ENCODE measurements at regions of chr1 and their contacts with region 1.

Region 1: DNA sequence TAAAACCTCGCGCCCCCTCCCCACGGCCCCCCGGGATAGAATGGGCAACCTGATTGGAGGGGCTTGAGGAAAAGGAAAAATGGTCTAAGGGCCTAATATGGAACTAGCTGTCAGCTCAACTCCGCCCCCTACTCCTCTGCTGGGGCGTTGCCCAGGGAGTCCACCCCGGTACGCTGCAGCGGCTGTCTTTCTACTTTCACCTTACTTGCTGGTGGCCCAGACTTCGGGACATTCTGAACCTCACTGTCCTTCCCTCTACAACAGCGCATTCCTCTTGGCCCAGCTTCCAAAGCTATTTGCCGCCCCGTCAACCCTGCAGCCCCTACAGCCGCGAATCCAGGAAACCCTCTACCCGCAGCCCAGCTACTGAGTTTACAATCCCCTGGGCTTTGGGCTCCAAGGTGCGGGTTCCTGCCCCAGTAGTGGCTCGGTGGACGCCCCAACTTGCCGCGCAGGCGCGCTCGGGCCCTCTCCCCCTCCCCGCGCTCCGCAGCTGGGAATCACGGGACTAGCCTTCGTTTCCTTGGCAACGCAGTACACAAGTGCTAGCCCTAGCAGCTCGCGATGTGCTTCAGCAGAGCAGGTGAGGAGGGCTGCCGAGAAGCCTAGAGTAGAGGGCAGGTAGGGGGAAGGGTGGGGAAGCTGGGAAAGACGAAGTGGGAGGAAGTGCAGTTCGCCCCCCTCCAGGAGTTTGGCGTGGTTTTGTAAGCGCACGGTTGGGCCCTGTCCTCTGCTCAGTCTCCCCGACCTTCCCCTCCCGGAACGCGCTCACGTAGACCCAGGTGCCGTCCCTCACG is 55.6 kb downstream of the CHIA start:
- DNase-seq: peak; percentile 92 to 94 (median 94)
- H3K4me3 ChIP-seq: peak overlapping the region; percentile 59 to 82
- H3K4me3 Mint-ChIP-seq: peak overlapping the region; percentile 87 to 96 (median 92)
- H3K27ac ChIP-seq: peak overlapping the region; percentile 46
- H3K27ac Mint-ChIP-seq: peak overlapping the region; percentile 84 to 97 (median 96)
- H3K4me1 ChIP-seq: peaks cover 16% of the 10 kb centered on the region
- H3K4me1 Mint-ChIP-seq: peaks cover 13 to 25% (median 18%) of the 10 kb centered on the region in 4 donors
- H3K27me3 ChIP-seq: no peaks in the 10 kb centered on the region
- H3K27me3 Mint-ChIP-seq: no peaks in the 10 kb centered on the region

Region 2: DNA sequence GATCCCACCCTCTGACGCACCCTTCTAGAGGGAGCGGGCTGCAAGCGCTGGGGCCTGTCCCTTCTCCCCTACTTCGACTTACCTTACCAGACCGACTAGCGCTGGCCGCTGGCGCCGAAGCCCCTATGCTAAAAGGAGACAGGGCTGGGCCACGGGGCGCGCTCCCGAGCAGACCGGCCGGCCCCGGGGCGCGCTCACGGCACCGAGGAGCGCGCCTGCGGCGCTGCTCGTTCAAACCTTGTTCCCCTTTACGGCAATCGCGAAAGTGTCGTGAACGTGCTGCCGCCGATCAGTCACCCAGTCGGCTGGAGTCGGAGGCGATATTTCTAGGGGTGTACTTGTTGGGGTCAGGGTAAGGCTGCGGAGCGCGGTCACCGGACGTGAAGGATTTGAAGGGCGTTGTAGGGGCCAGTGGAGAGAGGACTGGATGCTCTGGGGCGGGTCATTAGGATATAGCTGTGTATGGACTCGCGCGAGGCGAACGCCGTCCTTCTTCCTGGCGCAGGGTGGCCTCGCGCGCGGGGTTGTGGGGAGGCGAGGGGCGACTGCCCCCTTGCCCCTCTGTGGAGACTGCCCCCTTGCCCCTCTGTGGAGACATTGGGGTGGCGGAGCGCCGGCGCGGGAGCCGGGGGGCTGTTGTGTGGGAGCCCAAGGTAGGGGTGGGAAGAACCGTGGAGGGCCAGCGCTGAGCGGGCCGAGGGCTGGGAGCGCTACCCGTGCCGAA is 206.2 kb before region 1 on chr1 and contains the starts of genes CEPT1 and DRAM2:
- CTCF ChIA-PET with region 1: no interaction called
- POLR2A ChIA-PET with region 1: interaction called, 4 read pairs
- intact Hi-C with region 1: loop called (anchors 1 kb)
- DNase-seq: peak; percentile 89 to 95 (median 91)
- H3K4me3 ChIP-seq: peak within 1 kb of the TSS; percentile 57 to 97
- H3K4me3 Mint-ChIP-seq: peak within 1 kb of the TSS; percentile 98 to 100 (median 100)
- H3K27ac ChIP-seq: peak within 1 kb of the TSS; percentile 79
- H3K27ac Mint-ChIP-seq: peak within 1 kb of the TSS; percentile 84 to 100 (median 99)
- H3K4me1 ChIP-seq: peaks cover 54% of the 10 kb centered on the region
- H3K4me1 Mint-ChIP-seq: peaks cover 32 to 54% (median 41%) of the 10 kb centered on the region in 4 donors
- H3K27me3 ChIP-seq: no peaks in the 10 kb centered on the region
- H3K27me3 Mint-ChIP-seq: no peaks in the 10 kb centered on the region
- total RNA-seq, gene CEPT1: 49.1 to 49.6 TPM
- total RNA-seq, gene DRAM2: 37.5 to 38.8 TPM

Region 3: DNA sequence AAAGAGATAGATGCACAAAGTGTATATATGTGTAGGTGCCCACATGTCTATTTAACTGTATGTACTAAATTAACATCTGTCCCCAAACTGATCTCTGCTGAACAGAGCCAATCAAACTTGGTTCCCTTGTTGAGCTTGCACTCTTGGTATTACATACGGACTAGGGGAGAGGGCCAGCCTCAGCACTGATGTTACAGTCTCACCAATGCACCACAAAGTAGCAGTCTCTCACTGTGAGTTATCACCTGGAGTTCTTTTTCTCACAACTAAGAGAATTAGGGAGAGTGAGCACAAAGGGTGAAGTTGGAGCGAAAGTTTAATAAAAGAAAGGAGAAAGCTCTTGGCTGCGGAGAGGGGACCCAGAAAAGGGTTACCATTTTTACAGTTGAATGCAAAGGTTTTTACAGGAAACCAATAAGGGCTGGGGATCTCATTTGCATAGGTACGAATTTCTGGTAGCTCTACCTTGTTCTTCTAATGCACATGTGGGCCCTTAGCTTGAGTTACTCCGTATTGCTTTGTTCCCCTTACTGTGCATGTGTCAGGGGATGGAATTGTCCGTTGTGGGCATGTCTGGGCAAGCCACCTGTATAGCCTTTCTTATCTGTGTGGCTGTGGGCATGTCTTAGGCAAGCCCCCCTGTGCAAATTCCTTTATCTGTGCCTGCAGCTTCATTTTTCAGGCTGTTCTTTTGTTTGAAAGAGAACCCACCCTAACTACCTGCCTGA is 132.0 kb before region 1 on chr1:
- CTCF ChIA-PET with region 1: interaction called, 4 read pairs
- POLR2A ChIA-PET with region 1: interaction called, 16 read pairs
- intact Hi-C with region 1: no loop called
- DNase-seq: no peak
- H3K4me3 ChIP-seq: peak overlapping the region in 1 of 2 donors; percentile 25
- H3K4me3 Mint-ChIP-seq: peak overlapping the region; percentile 64 to 87 (median 76)
- H3K27ac ChIP-seq: peak overlapping the region; percentile 48
- H3K27ac Mint-ChIP-seq: peak overlapping the region; percentile 87 to 100 (median 97)
- H3K4me1 ChIP-seq: peaks cover 76% of the 10 kb centered on the region
- H3K4me1 Mint-ChIP-seq: peaks cover 73 to 88% (median 76%) of the 10 kb centered on the region in 4 donors
- H3K27me3 ChIP-seq: no peaks in the 10 kb centered on the region
- H3K27me3 Mint-ChIP-seq: peaks cover 0 to 2% of the 10 kb centered on the region in 2 donors

Region 4: GRCh38 chr1:111334169-111334568 is 12.1 kb before region 1 on chr1:
- CTCF ChIA-PET with region 1: interaction called, 7 read pairs
- POLR2A ChIA-PET with region 1: interaction called, 10 read pairs
- intact Hi-C with region 1: no loop called
- DNase-seq: peak; percentile 49 to 69 (median 68)
- H3K4me3 ChIP-seq: no peak overlapping the region
- H3K4me3 Mint-ChIP-seq: peak overlapping the region in 2 of 8 donors; percentile 24 to 45
- H3K27ac ChIP-seq: no peak overlapping the region
- H3K27ac Mint-ChIP-seq: peak overlapping the region in 3 of 7 donors; percentile 1 to 74 (median 3)
- H3K4me1 ChIP-seq: peaks cover 7% of the 10 kb centered on the region
- H3K4me1 Mint-ChIP-seq: peaks cover 2 to 12% (median 4%) of the 10 kb centered on the region in 4 donors
- H3K27me3 ChIP-seq: no peaks in the 10 kb centered on the region
- H3K27me3 Mint-ChIP-seq: no peaks in the 10 kb centered on the region

Region 5: GRCh38 chr1:111399792-111400610 is 53.7 kb after region 1 on chr1:
- CTCF ChIA-PET with region 1: interaction called, 10 read pairs
- POLR2A ChIA-PET with region 1: interaction called, 6 read pairs
- intact Hi-C with region 1: loop called (anchors 5 kb)
- DNase-seq: peak in 4 of 5 donors; percentile 27 to 39 (median 33)
- H3K4me3 ChIP-seq: no peak overlapping the region
- H3K4me3 Mint-ChIP-seq: peak overlapping the region in 1 of 8 donors; percentile 18
- H3K27ac ChIP-seq: no peak overlapping the region
- H3K27ac Mint-ChIP-seq: peak overlapping the region in 4 of 7 donors; percentile 18 to 55 (median 34)
- H3K4me1 ChIP-seq: peaks cover 6% of the 10 kb centered on the region
- H3K4me1 Mint-ChIP-seq: peaks cover 7 to 18% (median 13%) of the 10 kb centered on the region in 4 donors
- H3K27me3 ChIP-seq: no peaks in the 10 kb centered on the region
- H3K27me3 Mint-ChIP-seq: no peaks in the 10 kb centered on the region

Region 6: DNA sequence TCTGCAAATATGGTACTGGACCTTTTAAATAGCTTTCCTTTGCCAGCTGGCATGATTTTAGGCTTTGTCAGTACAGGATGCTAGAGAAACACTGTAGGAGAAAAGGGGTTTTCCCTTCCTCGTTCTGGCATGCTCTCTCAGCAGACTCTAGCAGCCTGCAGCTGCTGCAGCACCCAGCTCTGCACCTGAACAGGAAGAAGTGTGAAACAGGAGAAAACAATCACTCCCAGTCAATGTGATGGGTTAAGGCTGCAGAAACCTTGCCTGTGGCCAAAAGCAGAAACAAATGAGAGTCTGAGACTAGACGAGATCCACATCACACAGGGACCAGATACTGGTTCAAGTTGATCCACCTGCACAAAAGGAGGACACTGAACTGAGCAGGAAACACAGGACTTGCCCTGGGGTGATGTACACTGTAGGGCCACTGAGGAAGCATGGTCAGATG is 60.1 kb after region 1 on chr1:
- CTCF ChIA-PET with region 1: interaction called, 10 read pairs
- POLR2A ChIA-PET with region 1: interaction called, 3 read pairs
- intact Hi-C with region 1: loop called (anchors 5 kb)
- DNase-seq: peak; percentile 53 to 71 (median 61)
- H3K4me3 ChIP-seq: no peak overlapping the region
- H3K4me3 Mint-ChIP-seq: peak overlapping the region; percentile 47 to 80 (median 68)
- H3K27ac ChIP-seq: no peak overlapping the region
- H3K27ac Mint-ChIP-seq: peak overlapping the region; percentile 43 to 93 (median 69)
- H3K4me1 ChIP-seq: peaks cover 33% of the 10 kb centered on the region
- H3K4me1 Mint-ChIP-seq: peaks cover 23 to 32% (median 29%) of the 10 kb centered on the region in 4 donors
- H3K27me3 ChIP-seq: no peaks in the 10 kb centered on the region
- H3K27me3 Mint-ChIP-seq: no peaks in the 10 kb centered on the region

Measured in CD4-positive, alpha-beta memory T cell (primary cell).